Activated T-helper 2 cell treated with anti-CD3 and anti-CD28 coated beads, Interferon-gamma antibody, Interleukin-2, Interleukin-4, amounts not matched to agents 10 μg/mL and 5 μg/mL and 100 μg/mL, durations not matched to agents 14 hours and 24 hours and 36 hours (primary cell): ENCODE measurements at regions of chr20 and their contacts with region 1.

Region 1: DNA sequence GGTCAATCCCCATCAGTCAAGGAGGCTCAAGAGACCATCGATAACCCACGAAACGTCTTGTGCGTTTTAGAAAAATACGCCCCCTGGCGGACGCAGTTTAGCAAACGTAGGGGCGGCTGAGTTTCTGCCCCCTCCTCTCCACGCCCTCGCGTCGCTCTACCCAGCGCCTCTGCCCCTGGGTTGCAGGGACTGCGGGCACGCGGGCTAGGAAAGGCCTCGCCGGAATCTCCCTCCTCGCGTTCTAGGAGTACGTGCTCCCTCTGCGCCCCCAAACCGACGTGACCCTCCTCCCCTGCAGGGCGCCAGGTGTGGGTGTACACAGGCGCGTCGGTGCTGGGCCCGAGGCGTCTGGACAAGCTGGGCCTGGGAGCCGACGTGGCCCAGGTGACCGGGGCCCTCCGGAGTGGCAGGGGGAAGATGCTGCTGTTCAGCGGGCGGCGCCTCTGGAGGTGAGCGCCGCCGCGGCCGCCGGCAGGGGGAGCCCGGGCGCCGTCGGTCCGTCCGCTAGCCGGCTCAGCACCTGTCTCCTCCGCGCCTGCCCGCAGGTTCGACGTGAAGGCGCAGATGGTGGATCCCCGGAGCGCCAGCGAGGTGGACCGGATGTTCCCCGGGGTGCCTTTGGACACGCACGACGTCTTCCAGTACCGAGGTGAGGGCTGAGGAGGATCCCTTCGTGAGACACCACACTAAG is 5.3 kb downstream of the MMP9 start:
- DNase-seq: peak; percentile 49
- H3K4me3 Mint-ChIP-seq: peak overlapping the region; percentile 34
- H3K27ac Mint-ChIP-seq: no peak overlapping the region
- H3K4me1 Mint-ChIP-seq: peaks cover 37% of the 10 kb centered on the region
- H3K27me3 Mint-ChIP-seq: peaks cover 60% of the 10 kb centered on the region

Region 2: DNA sequence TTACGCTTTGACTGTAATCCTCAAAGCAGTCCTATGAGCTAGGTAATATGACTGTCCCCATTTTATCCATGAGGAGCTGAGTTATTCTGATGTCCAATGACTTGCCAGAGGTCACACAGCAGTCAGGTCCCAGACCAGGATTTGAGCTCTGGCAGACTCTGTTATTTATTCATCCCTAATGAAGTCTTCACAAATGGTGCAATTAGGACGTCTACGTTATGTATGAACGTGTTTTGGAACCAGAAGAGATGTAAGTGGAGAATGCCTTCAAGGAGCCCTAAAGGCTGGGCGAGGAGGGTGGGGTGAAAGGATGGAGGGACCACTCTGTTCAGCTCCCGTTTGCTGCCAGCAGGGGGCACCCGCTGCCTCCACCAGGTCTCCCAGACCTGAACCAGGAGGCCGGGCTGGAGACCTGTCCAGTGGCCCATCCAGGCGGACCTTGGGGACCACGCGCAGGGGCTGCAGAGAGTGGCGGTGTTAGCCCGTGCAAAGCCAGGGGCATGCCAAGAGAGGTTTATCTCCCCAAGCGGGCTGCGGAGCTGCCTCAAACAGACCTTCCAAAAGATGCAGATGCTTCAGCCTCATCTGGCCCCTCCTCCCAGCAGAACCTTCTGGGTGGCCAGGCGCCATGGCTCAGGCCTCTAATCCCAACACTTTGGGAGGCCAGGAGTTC is 26.7 kb before region 1 on chr20:
- intact Hi-C with region 1: loop called (anchors 1 kb)
- DNase-seq: peak; percentile 61
- H3K4me3 Mint-ChIP-seq: no peak overlapping the region
- H3K27ac Mint-ChIP-seq: no peak overlapping the region
- H3K4me1 Mint-ChIP-seq: peaks cover 6% of the 10 kb centered on the region
- H3K27me3 Mint-ChIP-seq: peaks cover 19% of the 10 kb centered on the region

Region 3: DNA sequence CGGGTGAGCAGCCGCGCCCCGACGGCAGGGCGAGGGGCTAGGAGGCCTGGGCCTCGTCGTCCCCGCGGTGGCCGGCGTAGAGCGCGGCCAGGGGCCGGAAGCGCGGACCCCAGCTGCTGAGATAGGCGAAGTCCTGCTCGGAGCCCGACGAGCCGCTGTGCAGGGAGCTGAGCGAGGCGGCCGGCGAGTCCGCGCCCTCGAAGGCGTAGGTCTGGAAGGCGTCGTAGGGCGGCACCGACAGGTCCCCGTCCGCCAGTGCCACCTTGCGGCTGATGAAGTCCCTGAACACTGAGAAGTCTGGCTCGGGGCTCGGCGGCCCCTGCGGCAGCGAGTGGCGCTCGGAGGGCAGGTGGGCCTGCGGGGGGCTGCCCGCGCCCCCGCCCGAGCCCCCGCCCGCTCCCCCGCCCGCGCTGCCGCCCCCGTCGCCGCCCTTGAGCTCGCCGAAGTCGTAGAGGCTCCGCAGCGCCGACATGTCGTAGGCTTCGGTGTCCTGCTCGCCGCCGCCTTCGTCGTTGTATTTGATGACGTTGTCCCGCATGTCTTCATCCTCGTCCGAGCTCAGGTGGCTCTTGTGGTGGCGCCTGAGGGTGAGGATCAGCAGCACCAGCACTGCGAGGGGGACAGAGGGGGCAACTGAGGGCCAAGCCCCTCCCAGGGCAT is 160.6 kb after region 1 on chr20:
- intact Hi-C with region 1: loop called (anchors 2 kb)
- DNase-seq: peak; percentile 46
- H3K4me3 Mint-ChIP-seq: no peak overlapping the region
- H3K27ac Mint-ChIP-seq: no peak overlapping the region
- H3K4me1 Mint-ChIP-seq: no peaks in the 10 kb centered on the region
- H3K27me3 Mint-ChIP-seq: peaks cover 39% of the 10 kb centered on the region